Heart left ventricle (tissue), 16 donors: ENCODE measurements at regions of chr4 and their contacts with region 1.

Region 1: DNA sequence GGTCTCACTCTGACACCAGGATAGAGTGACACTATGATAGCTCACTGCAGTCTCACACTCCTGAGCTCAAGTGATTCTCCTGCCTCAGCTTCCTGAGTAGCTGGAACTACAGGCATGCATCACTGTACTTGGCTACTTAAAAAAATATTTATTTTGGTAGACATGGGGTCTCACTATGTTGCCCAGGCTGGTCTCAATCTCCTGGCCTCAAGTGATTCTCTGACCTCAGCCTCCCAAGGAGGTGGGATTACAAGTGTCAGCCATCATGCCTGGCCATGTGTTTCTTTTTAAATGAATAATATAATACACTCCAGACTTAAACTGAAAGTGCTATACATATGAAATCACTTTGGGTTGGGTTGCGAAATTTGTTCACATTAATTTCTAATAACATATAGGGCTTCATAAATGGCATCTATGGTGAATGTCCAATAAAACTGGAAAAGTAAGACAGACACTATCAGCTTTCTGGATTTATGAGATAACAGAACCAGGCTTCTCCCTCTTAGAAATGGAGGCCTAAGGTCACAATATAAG is 48.0 kb downstream of the SEC24D start:
- DNase-seq: no peak
- ATAC-seq: no peak
- H3K4me3 ChIP-seq: no peak overlapping the region
- H3K27ac ChIP-seq: peak overlapping the region in 3 of 12 donors; percentile 5 to 64 (median 12)
- H3K4me1 ChIP-seq: peaks cover 0 to 65% (median 17%) of the 10 kb centered on the region in 12 donors
- H3K27me3 ChIP-seq: no peaks in the 10 kb centered on the region
- CTCF ChIP-seq: no peak
- POLR2A ChIP-seq: no peak

Region 2: GRCh38 chr4:118826723-118827444 is 39.0 kb after region 1 on chr4:
- intact Hi-C with region 1: loop called in 1 of 10 experiments (anchors 5 kb)
- DNase-seq: no peak
- ATAC-seq: no peak
- H3K4me3 ChIP-seq: peak overlapping the region in 1 of 12 donors; percentile 11
- H3K27ac ChIP-seq: no peak overlapping the region
- H3K4me1 ChIP-seq: peaks cover 0 to 70% (median 36%) of the 10 kb centered on the region in 12 donors
- H3K27me3 ChIP-seq: no peaks in the 10 kb centered on the region
- CTCF ChIP-seq: no peak
- POLR2A ChIP-seq: no peak

Region 3: GRCh38 chr4:119041951-119042560 is 254.1 kb after region 1 on chr4:
- intact Hi-C with region 1: no loop called
- DNase-seq: peak in 3 of 5 donors; percentile 45 to 58 (median 53)
- ATAC-seq: peak; percentile 13 to 71 (median 66)
- H3K4me3 ChIP-seq: no peak overlapping the region
- H3K27ac ChIP-seq: peak overlapping the region in 10 of 12 donors; percentile 27 to 91 (median 70)
- H3K4me1 ChIP-seq: peaks cover 0 to 86% (median 59%) of the 10 kb centered on the region in 12 donors
- H3K27me3 ChIP-seq: no peaks in the 10 kb centered on the region
- CTCF ChIP-seq: peak; percentile 43 to 72 (median 64)
- POLR2A ChIP-seq: no peak